ENCODE measurements at regions of chrX and their contacts with region 1.

Region 1: DNA sequence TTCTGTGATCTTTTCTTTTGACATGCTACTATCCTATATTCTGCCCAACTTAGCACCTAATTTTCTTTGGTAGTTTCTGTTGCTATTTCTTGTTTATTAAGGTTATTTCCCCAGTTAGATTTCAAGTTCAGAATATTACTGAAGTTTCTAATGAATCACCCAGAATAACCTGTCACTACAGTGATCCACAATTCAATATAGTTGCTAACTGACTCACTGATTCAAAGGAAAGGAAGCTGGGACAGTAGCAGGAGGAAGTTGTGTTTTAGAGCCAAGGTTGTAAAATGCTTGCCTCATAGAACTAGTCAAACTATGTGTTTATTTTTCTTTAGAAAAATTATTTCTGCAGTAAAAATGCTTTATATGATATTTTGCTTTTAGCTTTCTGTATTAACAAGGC is 37.4 kb downstream of the PAK3 start:
- DNase-seq: no peak
- H3K4me3 Mint-ChIP-seq: no peak overlapping the region
- H3K27ac Mint-ChIP-seq: no peak overlapping the region
- H3K4me1 Mint-ChIP-seq: peaks cover 12% of the 10 kb centered on the region
- H3K27me3 Mint-ChIP-seq: no peaks in the 10 kb centered on the region

Region 2: DNA sequence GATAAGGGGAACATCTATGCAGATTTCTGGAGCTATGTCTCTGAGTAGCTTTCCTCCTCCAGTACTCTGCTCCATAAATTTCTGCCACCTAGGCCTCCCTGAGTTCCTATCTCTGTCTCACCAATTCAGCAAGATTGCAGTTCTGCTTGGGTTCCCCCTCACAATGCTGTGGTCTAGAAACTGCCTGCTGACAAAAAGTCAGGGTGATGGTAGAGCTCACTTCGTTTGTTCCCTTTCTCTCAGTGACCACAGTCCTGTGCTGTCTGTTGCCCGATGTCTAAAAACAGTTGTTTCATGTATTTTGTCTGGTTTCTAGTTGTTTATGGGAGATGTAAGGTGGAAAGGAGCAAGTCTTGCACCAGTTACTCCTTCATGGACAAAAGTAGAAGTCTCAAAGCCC is 856.6 kb before region 1 on chrX:
- CTCF ChIA-PET with region 1: no interaction called
- intact Hi-C with region 1: no loop called
- DNase-seq: no peak
- H3K4me3 Mint-ChIP-seq: no peak overlapping the region
- H3K27ac Mint-ChIP-seq: no peak overlapping the region
- H3K4me1 Mint-ChIP-seq: peaks cover 19% of the 10 kb centered on the region
- H3K27me3 Mint-ChIP-seq: no peaks in the 10 kb centered on the region

Region 3: DNA sequence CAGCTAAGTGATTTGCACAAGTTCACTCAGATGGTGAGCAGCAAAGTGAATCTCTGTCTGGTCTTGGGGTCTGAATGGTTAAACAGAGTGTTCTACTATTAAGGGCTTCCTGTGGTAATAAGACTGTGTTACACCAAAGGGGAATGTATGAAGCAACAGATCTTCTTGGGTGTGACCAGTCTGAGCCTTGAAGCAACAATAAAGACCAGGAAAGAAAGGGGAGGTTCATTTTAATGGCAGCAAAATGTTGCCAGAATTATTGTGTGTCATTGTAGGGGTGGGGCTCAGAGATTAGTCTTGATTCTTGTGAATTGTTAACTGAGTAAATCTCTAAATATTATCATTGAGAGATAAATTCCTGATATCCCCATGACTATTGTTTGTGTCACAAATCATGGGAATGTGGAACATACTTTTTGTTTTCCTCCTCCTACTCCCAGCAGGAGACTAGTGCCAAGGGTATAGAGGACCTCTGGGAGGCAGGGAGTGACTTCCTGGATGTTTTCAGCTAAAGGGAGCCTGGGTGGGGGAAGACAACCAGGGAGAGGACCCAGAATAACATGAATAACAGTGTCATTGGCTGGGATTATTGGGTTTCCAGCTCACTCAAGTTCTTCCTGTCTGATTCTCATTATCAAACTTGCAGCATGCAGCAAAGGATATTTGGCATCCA is 178.8 kb before region 1 on chrX:
- CTCF ChIA-PET with region 1: no interaction called
- intact Hi-C with region 1: no loop called
- DNase-seq: no peak
- H3K4me3 Mint-ChIP-seq: no peak overlapping the region
- H3K27ac Mint-ChIP-seq: no peak overlapping the region
- H3K4me1 Mint-ChIP-seq: no peaks in the 10 kb centered on the region
- H3K27me3 Mint-ChIP-seq: no peaks in the 10 kb centered on the region

Region 4: GRCh38 chrX:111123125-111123524 is 10.3 kb before region 1 on chrX:
- CTCF ChIA-PET with region 1: no interaction called
- intact Hi-C with region 1: loop called (anchors 1 kb)
- DNase-seq: no peak
- H3K4me3 Mint-ChIP-seq: peak overlapping the region; percentile 34
- H3K27ac Mint-ChIP-seq: peak overlapping the region; percentile 70
- H3K4me1 Mint-ChIP-seq: peaks cover 13% of the 10 kb centered on the region
- H3K27me3 Mint-ChIP-seq: no peaks in the 10 kb centered on the region

Region 5: DNA sequence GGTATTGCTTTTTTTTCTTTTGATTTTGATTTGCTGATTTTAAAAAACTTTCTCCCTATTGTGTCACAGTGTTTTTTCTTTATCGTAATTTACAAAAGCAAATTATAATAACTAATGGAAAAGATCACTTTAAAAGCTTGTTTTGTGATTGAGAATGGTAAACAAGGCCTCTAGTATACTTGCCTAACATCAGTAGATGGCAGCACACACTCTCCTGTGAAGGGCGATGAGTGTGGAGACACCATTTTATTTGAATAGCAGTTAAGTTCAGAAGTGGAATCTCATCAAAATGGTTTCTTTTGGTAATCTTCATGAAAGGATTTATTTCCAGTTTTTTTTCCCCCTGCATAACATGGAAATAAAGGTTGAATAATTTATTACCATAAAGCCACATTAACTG is 34.9 kb after region 1 on chrX:
- CTCF ChIA-PET with region 1: no interaction called
- intact Hi-C with region 1: no loop called
- DNase-seq: peak; percentile 16
- H3K4me3 Mint-ChIP-seq: no peak overlapping the region
- H3K27ac Mint-ChIP-seq: no peak overlapping the region
- H3K4me1 Mint-ChIP-seq: no peaks in the 10 kb centered on the region
- H3K27me3 Mint-ChIP-seq: no peaks in the 10 kb centered on the region

Region 6: DNA sequence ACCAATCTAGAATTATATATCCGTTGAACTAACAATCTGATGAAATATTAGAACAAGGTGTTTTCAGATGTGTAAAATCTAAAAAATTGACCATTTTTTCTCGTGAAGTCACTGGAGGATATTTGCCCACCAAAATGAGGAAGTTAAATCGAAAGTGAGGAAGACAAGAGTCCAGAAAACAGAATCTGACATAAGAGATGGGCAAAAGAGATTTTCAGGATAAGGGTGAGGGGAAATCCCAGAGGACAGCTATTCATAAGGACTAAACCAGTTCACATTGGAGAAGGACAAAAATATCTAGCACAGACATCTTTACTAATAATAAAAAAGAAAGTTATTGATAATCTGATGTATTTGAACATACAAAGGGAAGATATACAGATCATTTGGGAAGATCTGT is 528.9 kb after region 1 on chrX:
- CTCF ChIA-PET with region 1: no interaction called
- intact Hi-C with region 1: no loop called
- DNase-seq: no peak
- H3K4me3 Mint-ChIP-seq: no peak overlapping the region
- H3K27ac Mint-ChIP-seq: no peak overlapping the region
- H3K4me1 Mint-ChIP-seq: no peaks in the 10 kb centered on the region
- H3K27me3 Mint-ChIP-seq: no peaks in the 10 kb centered on the region

Measured in activated naive CD4-positive, alpha-beta T cell treated with anti-CD3 and anti-CD28 coated beads for 36 hours (primary cell).